ENCODE measurements at regions of chr3 and their contacts with region 1.

Region 1: DNA sequence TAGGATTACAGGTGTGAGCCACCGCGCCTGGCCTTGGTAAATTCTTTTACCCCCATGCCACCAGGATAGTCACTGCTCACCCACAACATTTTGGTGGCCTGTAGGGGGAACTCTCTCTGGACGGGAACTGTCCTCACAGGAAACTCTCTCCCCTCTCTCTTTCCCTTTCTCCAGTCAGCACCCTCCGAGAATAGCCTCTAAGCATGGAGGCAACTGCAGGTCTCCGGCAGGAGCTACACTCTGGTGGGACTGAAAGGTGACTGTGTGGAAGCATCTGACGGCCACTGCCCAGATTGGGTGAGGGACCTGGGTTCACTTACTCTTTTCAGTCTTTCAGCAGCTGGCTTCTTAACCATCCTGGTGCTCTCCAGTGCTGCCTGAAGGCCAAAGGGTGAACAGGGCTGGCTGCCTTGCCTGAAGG is 21.3 kb downstream of the TRANK1 start:
- DNase-seq: peak in 2 of 3 donors; percentile 34 to 63
- H3K4me3 ChIP-seq: peak overlapping the region; percentile 12 to 85 (median 58)
- H3K27ac ChIP-seq: peak overlapping the region; percentile 69 to 88
- H3K4me1 ChIP-seq: peaks cover 18 to 46% (median 34%) of the 10 kb centered on the region in 4 experiments
- H3K27me3 ChIP-seq: no peaks in the 10 kb centered on the region

Region 2: GRCh38 chr3:36911990-36912804 is 11.3 kb before region 1 on chr3:
- CTCF ChIA-PET with region 1: interaction called, 110 read pairs
- POLR2A ChIA-PET with region 1: no interaction called
- DNase-seq: peak; percentile 84 to 97 (median 94)
- H3K4me3 ChIP-seq: peak overlapping the region in 6 of 7 experiments; percentile 38 to 71 (median 48)
- H3K27ac ChIP-seq: peak overlapping the region; percentile 47 to 84
- H3K4me1 ChIP-seq: peaks cover 29 to 43% (median 36%) of the 10 kb centered on the region in 4 experiments
- H3K27me3 ChIP-seq: no peaks in the 10 kb centered on the region

Region 3: DNA sequence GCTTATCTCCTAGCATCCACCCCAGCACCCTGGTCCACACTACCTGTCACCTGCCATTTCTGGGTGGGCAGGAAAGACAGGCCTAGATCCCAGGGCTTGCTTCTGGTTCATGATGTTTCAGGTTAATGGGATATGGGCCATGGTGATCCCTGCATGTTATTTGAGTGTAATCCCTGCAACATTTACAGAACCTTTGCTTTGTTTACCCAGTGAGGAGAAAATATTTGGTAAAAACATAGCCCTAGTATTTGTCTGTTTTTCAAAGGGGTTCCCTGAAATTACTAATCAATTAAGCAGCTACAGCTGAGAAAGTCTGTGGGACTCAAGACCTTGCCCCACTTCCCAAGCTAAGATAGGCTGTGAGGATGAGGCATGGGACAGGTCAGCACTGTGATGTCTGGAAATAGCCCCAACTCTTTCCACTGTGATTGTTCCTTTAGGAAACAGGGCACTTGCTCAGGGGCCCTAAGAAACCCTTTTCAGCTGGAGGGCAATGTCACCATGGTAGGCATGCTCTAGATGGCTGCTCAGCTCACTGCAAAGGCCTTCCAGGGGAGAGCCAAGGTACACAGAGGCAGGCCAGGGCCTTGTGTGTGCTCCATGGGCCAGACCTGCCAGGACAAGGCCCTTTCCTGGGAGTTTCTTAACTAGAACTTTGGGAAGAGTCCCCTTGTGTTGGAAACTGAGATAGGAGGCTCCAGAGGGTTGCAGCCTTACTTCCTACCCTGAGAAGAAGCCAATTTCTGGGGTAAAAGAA is 10.2 kb after region 1 on chr3:
- CTCF ChIA-PET with region 1: interaction called, 20 read pairs
- POLR2A ChIA-PET with region 1: interaction called, 5 read pairs
- DNase-seq: no peak
- H3K4me3 ChIP-seq: no peak overlapping the region
- H3K27ac ChIP-seq: no peak overlapping the region
- H3K4me1 ChIP-seq: peaks cover 0 to 7% (median 3%) of the 10 kb centered on the region in 4 experiments
- H3K27me3 ChIP-seq: no peaks in the 10 kb centered on the region

Region 4: DNA sequence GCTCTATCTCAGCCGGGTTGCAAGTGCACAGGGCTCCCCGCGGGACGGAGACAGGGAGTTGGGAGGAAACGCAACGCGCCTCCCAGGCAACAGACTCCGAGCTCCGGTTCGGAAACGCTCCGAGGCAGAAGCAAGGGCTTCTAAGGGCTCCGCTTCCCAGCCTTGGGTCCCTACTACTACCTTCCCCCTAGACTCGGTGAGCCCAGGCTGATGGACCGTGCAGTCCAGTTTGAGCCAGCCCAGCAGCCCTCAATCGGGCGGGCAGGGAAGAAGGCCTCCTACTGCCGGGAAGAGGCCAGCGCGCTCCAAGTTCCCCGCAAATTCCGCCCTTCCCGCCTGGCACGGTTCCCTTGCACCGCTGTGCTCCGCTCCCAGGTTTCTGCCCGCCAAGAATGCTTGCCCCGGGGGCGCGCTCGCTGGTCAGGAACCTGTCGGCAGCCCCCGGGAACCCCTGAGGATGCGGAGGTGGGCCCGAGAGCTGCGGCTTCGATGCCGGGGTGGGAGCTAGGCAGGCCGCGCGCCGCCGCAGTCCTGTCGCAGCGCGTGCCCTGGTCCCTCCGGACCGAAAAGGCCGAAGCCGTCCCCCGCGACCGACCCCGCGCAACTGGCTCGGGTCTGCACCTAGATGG is 20.6 kb after region 1 on chr3:
- CTCF ChIA-PET with region 1: interaction called, 11 read pairs
- POLR2A ChIA-PET with region 1: interaction called, 11 read pairs
- DNase-seq: peak in 2 of 3 donors; percentile 60 to 72
- H3K4me3 ChIP-seq: peak overlapping the region; percentile 70 to 92 (median 84)
- H3K27ac ChIP-seq: peak overlapping the region; percentile 40 to 72
- H3K4me1 ChIP-seq: peaks cover 0 to 18% (median 16%) of the 10 kb centered on the region in 4 experiments
- H3K27me3 ChIP-seq: no peaks in the 10 kb centered on the region